Common myeloid progenitor, CD34-positive (primary cell): ENCODE measurements at regions of chr2 and their contacts with region 1.

Region 1: DNA sequence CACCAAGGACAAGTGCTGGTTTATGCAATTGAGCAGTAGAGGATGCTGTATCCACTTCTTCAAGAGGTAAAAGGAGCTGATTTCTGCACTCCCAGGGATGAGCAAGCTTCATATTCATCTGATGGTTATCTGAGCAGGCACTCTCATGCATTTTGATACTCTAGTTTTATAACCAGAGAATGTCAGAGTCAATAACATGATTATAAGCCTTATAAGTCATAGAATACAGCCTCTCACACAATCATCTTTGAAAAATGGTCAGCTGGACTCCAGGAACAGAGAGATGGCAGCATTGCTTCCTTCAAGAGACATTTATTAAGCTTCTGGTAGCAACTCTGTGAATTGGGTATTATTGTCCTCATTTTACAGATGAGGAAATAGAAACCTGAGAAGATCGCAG is 167.1 kb downstream of the SLC8A1 start:
- DNase-seq: no peak
- H3K4me3 ChIP-seq: no peak overlapping the region
- H3K27ac ChIP-seq: no peak overlapping the region
- H3K4me1 ChIP-seq: no peaks in the 10 kb centered on the region
- H3K27me3 ChIP-seq: no peaks in the 10 kb centered on the region

Region 2: GRCh38 chr2:40256649-40257048 is 28.1 kb before region 1 on chr2:
- CTCF ChIA-PET with region 1: no interaction called
- POLR2A ChIA-PET with region 1: no interaction called
- DNase-seq: peak in 2 of 3 donors; percentile 79 to 81
- H3K4me3 ChIP-seq: no peak overlapping the region
- H3K27ac ChIP-seq: no peak overlapping the region
- H3K4me1 ChIP-seq: peaks cover 0 to 5% (median 2%) of the 10 kb centered on the region in 4 experiments
- H3K27me3 ChIP-seq: no peaks in the 10 kb centered on the region

Region 3: GRCh38 chr2:40274270-40274669 is 10.5 kb before region 1 on chr2:
- CTCF ChIA-PET with region 1: interaction called, 10 read pairs
- POLR2A ChIA-PET with region 1: no interaction called
- DNase-seq: no peak
- H3K4me3 ChIP-seq: no peak overlapping the region
- H3K27ac ChIP-seq: no peak overlapping the region
- H3K4me1 ChIP-seq: no peaks in the 10 kb centered on the region
- H3K27me3 ChIP-seq: no peaks in the 10 kb centered on the region

Region 4: DNA sequence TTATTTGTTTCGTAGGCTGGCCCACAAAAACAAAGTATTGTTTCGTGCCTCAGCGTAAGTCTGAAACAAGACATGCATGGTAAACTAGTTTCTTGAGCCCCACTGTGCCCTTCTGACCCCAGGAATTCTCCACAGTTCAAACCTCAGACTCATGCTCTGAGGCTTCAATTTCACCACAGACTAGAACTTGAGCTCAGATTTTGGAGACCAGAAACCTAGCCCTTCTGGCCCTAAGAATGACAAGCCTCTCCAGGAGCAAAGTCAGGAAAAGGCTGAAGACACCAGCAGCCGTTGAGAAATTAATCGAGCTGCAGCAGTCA is 15.6 kb after region 1 on chr2:
- CTCF ChIA-PET with region 1: no interaction called
- POLR2A ChIA-PET with region 1: no interaction called
- DNase-seq: no peak
- H3K4me3 ChIP-seq: no peak overlapping the region
- H3K27ac ChIP-seq: no peak overlapping the region
- H3K4me1 ChIP-seq: no peaks in the 10 kb centered on the region
- H3K27me3 ChIP-seq: no peaks in the 10 kb centered on the region

Region 5: GRCh38 chr2:40332191-40332826 is 47.5 kb after region 1 on chr2:
- CTCF ChIA-PET with region 1: no interaction called
- POLR2A ChIA-PET with region 1: no interaction called
- DNase-seq: peak; percentile 19 to 73 (median 64)
- H3K4me3 ChIP-seq: no peak overlapping the region
- H3K27ac ChIP-seq: no peak overlapping the region
- H3K4me1 ChIP-seq: peaks cover 0 to 20% (median 11%) of the 10 kb centered on the region in 4 experiments
- H3K27me3 ChIP-seq: no peaks in the 10 kb centered on the region